ENCODE measurements at regions of chr9 and their contacts with region 1.

Region 1: GRCh38 chr9:112361601-112362000 is 18.3 kb upstream of the HSDL2 start:
- DNase-seq: peak; percentile 18
- H3K4me3 ChIP-seq: no peak overlapping the region
- H3K27ac ChIP-seq: no peak overlapping the region
- H3K4me1 ChIP-seq: no peaks in the 10 kb centered on the region
- H3K27me3 ChIP-seq: no peaks in the 10 kb centered on the region
- CTCF ChIP-seq: peak; percentile 72
- EP300 ChIP-seq: no peak
- RAD21 ChIP-seq: peak; percentile 78

Region 2: GRCh38 chr9:112086627-112087026 is 275.0 kb before region 1 on chr9:
- CTCF ChIA-PET with region 1: interaction called, 63 read pairs
- POLR2A ChIA-PET with region 1: no interaction called
- DNase-seq: peak; percentile 42
- H3K4me3 ChIP-seq: no peak overlapping the region; a peak in 1 of 4 replicates
- H3K27ac ChIP-seq: no peak overlapping the region
- H3K4me1 ChIP-seq: no peaks in the 10 kb centered on the region
- H3K27me3 ChIP-seq: no peaks in the 10 kb centered on the region
- CTCF ChIP-seq: peak; percentile 63
- EP300 ChIP-seq: no peak
- RAD21 ChIP-seq: peak; percentile 75

Region 3: DNA sequence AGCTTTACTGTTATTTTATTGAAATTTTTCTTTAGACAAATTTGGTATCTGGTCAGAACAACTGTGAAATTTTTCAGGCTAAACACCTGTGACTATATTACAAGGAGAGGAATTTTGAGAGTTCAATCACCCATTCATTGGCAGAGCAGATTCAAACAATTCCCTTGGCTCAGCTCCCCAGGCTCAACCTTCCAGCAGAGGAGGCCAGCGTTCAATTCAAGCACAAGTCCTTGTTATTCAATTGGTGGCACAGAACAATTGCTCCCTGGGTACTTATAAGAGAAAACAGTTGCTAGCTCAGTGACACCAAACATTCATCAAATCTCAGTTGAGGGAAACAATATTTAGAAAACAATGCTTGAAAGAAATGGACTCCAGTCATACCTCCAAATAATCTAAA is 269.8 kb before region 1 on chr9:
- CTCF ChIA-PET with region 1: interaction called, 63 read pairs
- POLR2A ChIA-PET with region 1: no interaction called
- DNase-seq: no peak
- H3K4me3 ChIP-seq: no peak overlapping the region
- H3K27ac ChIP-seq: no peak overlapping the region
- H3K4me1 ChIP-seq: no peaks in the 10 kb centered on the region
- H3K27me3 ChIP-seq: no peaks in the 10 kb centered on the region
- CTCF ChIP-seq: peak; percentile 48
- EP300 ChIP-seq: no peak
- RAD21 ChIP-seq: peak; percentile 63

Region 4: GRCh38 chr9:112097712-112098688 is 263.6 kb before region 1 on chr9:
- CTCF ChIA-PET with region 1: interaction called, 50 read pairs
- POLR2A ChIA-PET with region 1: no interaction called
- DNase-seq: peak; percentile 60
- H3K4me3 ChIP-seq: no peak overlapping the region; a peak in 1 of 4 replicates
- H3K27ac ChIP-seq: no peak overlapping the region
- H3K4me1 ChIP-seq: no peaks in the 10 kb centered on the region; a peak in 1 of 4 replicates
- H3K27me3 ChIP-seq: no peaks in the 10 kb centered on the region
- CTCF ChIP-seq: peak; percentile 86
- EP300 ChIP-seq: no peak
- RAD21 ChIP-seq: peak; percentile 87

Region 5: DNA sequence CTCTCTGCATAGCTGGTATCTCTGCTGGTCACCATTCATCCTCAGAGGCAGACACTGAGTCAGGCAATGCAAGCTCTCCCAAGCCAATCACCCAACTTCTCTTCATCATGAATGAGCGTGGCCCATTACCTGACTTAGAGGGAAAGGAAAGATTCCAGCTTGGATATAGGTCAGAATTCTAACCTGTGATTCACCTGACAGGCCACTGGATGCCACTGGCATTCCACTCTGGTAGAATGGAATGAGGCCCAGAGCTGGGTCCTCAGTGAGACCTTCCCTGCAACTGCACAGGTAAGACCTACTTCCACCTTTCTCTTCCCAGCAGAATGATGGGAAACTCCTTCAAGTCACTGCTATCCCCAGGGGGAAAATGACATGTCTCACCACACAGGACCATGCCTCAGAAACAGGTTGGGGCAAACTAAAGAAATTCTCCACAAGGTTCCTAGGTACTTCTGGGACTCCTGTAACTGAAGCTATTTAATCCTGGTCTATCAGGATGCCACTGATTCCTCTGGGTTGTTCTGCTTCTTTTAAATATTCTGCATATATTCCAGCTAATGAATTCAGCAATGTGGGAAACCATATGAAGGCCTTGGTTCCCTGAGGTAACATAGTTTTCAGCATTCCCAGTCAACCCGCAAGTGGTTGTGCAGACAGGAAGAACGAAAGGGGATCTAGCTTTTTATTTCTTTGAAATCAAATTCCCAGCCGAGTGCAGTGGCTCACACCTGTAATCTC is 248.5 kb before region 1 on chr9:
- CTCF ChIA-PET with region 1: interaction called, 20 read pairs
- POLR2A ChIA-PET with region 1: no interaction called
- DNase-seq: peak; percentile 24
- H3K4me3 ChIP-seq: no peak overlapping the region
- H3K27ac ChIP-seq: peak overlapping the region in 1 of 2 experiments; percentile 88; a peak in 2 of 4 replicates
- H3K4me1 ChIP-seq: peaks cover 0 to 21% of the 10 kb centered on the region in 2 experiments; a peak in 1 of 4 replicates
- H3K27me3 ChIP-seq: no peaks in the 10 kb centered on the region
- CTCF ChIP-seq: peak; percentile 50
- EP300 ChIP-seq: no peak
- RAD21 ChIP-seq: peak; percentile 71

Region 6: GRCh38 chr9:112119225-112120029 is 242.2 kb before region 1 on chr9:
- CTCF ChIA-PET with region 1: interaction called, 20 read pairs
- POLR2A ChIA-PET with region 1: no interaction called
- DNase-seq: no peak
- H3K4me3 ChIP-seq: no peak overlapping the region
- H3K27ac ChIP-seq: no peak overlapping the region; a peak in 1 of 4 replicates
- H3K4me1 ChIP-seq: peaks cover 5 to 7% of the 10 kb centered on the region in 2 experiments; a peak in 2 of 4 replicates
- H3K27me3 ChIP-seq: no peaks in the 10 kb centered on the region
- CTCF ChIP-seq: no peak
- EP300 ChIP-seq: no peak
- RAD21 ChIP-seq: no peak

Region 7: GRCh38 chr9:112348257-112349007 is 13.2 kb before region 1 on chr9:
- CTCF ChIA-PET with region 1: interaction called, 20 read pairs
- POLR2A ChIA-PET with region 1: interaction called, 3 read pairs
- DNase-seq: peak; percentile 61
- H3K4me3 ChIP-seq: peak overlapping the region in 1 of 2 experiments; percentile 25; a peak in 1 of 4 replicates
- H3K27ac ChIP-seq: no peak overlapping the region
- H3K4me1 ChIP-seq: no peaks in the 10 kb centered on the region; a peak in 1 of 4 replicates
- H3K27me3 ChIP-seq: no peaks in the 10 kb centered on the region
- CTCF ChIP-seq: no peak
- EP300 ChIP-seq: no peak
- RAD21 ChIP-seq: no peak